ENCODE measurements at regions of chr17 and their contacts with region 1.

Region 1: GRCh38 chr17:27654654-27655524 is 23.9 kb downstream of the LGALS9 start:
- DNase-seq: peak; percentile 82
- H3K4me3 Mint-ChIP-seq: no peak overlapping the region
- H3K27ac Mint-ChIP-seq: no peak overlapping the region
- H3K4me1 Mint-ChIP-seq: peaks cover 6% of the 10 kb centered on the region
- H3K27me3 Mint-ChIP-seq: no peaks in the 10 kb centered on the region

Region 2: GRCh38 chr17:27332485-27333409 is 322.1 kb before region 1 on chr17:
- CTCF ChIA-PET with region 1: interaction called, 12 read pairs
- intact Hi-C with region 1: loop called (anchors 1 kb)
- DNase-seq: peak; percentile 97
- H3K4me3 Mint-ChIP-seq: peak overlapping the region; percentile 75
- H3K27ac Mint-ChIP-seq: peak overlapping the region; percentile 74
- H3K4me1 Mint-ChIP-seq: peaks cover 20% of the 10 kb centered on the region
- H3K27me3 Mint-ChIP-seq: peaks cover 3% of the 10 kb centered on the region

Region 3: DNA sequence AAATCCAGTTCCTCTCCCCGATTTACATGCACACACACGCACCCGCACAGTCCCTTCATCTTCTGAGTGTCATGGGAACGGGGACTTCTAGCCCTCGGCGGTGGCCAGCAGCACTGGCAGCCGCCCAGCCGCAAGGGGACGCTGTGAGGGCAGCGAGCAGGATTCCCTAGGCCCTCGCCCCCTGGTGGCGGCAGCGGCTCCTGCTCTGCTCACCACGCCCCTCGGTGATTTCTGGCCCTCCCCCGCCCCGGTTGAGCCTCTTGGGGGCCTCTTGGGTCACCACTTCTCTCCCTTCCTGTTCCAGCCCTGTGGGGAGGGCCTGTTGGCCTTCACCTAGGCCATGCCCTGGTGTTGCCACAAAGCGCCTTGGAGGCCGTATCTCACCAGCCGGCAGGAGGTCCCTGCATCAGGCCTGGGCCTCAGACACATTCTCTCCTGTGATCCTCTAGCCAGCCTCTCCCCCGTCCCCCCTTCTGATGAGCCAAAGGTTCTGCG is 273.8 kb before region 1 on chr17:
- CTCF ChIA-PET with region 1: interaction called, 11 read pairs
- intact Hi-C with region 1: no loop called
- DNase-seq: peak; percentile 87
- H3K4me3 Mint-ChIP-seq: no peak overlapping the region
- H3K27ac Mint-ChIP-seq: no peak overlapping the region
- H3K4me1 Mint-ChIP-seq: no peaks in the 10 kb centered on the region
- H3K27me3 Mint-ChIP-seq: peaks cover 24% of the 10 kb centered on the region

Region 4: GRCh38 chr17:27630607-27631410 is 24.1 kb before region 1 on chr17 and contains the start of gene LGALS9:
- CTCF ChIA-PET with region 1: interaction called, 12 read pairs
- intact Hi-C with region 1: no loop called
- DNase-seq: peak; percentile 61
- H3K4me3 Mint-ChIP-seq: peak within 1 kb of the TSS; percentile 81
- H3K27ac Mint-ChIP-seq: peak within 1 kb of the TSS; percentile 80
- H3K4me1 Mint-ChIP-seq: peaks cover 47% of the 10 kb centered on the region
- H3K27me3 Mint-ChIP-seq: no peaks in the 10 kb centered on the region
- total RNA-seq, gene LGALS9: 80.2 to 81.1 TPM

Region 5: GRCh38 chr17:27666831-27667560 is 12.1 kb after region 1 on chr17:
- CTCF ChIA-PET with region 1: interaction called, 19 read pairs
- intact Hi-C with region 1: no loop called
- DNase-seq: no peak
- H3K4me3 Mint-ChIP-seq: no peak overlapping the region
- H3K27ac Mint-ChIP-seq: no peak overlapping the region
- H3K4me1 Mint-ChIP-seq: no peaks in the 10 kb centered on the region
- H3K27me3 Mint-ChIP-seq: no peaks in the 10 kb centered on the region

Region 6: GRCh38 chr17:27879987-27880608 is 225.2 kb after region 1 on chr17:
- CTCF ChIA-PET with region 1: interaction called, 11 read pairs
- intact Hi-C with region 1: loop called (anchors 2 kb)
- DNase-seq: peak; percentile 89
- H3K4me3 Mint-ChIP-seq: no peak overlapping the region
- H3K27ac Mint-ChIP-seq: no peak overlapping the region
- H3K4me1 Mint-ChIP-seq: peaks cover 19% of the 10 kb centered on the region
- H3K27me3 Mint-ChIP-seq: no peaks in the 10 kb centered on the region

Measured in activated naive CD4-positive, alpha-beta T cell treated with anti-CD3 and anti-CD28 coated beads for 36 hours (primary cell).